ENCODE measurements at regions of chr1 and their contacts with region 1.

Region 1: GRCh38 chr1:168960595-168960994 is 145.9 kb upstream of the ATP1B1 start:
- DNase-seq: peak in 7 of 10 donors; percentile 38 to 74 (median 53)
- H3K4me3 ChIP-seq: peak overlapping the region in 12 of 59 donors; percentile 6 to 35 (median 15)
- H3K27ac ChIP-seq: peak overlapping the region in 51 of 59 donors; percentile 12 to 88 (median 62)
- H3K27me3 ChIP-seq: no peaks in the 10 kb centered on the region
- CTCF ChIP-seq: peak in 6 of 56 donors; percentile 11 to 28 (median 16)

Region 2: DNA sequence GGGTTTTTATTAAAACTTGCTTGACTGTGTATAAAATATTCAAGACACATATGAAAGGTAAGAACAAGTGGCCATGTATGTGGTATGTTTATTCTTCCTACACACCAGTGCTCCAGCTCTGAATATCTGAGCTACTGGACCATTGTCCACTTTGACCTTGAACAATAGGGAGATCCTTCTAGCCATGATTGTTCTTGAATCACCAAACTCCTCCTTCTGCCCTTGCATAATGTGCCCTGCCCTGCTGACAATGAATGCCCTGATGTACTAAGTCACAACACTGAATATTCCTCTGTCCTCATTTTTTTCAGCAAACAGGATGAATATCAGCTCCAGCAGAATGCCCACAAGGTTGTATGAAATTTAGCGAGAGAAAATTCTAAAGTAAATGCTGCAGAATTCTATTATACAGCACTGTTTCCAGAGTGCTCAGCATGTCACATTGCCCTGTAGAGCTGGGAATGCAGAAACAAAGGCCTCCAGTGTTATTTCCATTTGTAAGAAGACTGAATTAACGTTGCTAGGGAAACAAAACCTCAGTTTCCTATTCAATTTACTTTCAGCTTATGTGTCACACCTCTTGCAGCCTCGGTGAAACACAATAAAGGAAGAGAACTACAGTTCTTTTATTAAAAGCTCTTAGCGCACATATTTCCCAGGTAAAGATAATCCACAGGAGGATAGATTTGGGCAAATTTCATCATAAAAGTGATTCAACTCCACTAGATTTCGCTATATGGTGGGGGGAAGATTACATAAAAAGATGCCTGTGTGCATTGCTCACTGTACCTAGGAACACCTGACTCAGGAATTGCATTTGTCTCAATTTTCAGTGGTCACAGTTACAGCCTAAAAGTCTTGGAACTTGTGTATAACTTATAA is 41.5 kb before region 1 on chr1:
- intact Hi-C with region 1: loop called in 1 of 2 experiments (anchors 5 kb)
- DNase-seq: no peak
- H3K4me3 ChIP-seq: peak overlapping the region in 3 of 59 donors; percentile 5 to 26 (median 8)
- H3K27ac ChIP-seq: peak overlapping the region in 51 of 59 donors; percentile 8 to 83 (median 59)
- H3K27me3 ChIP-seq: no peaks in the 10 kb centered on the region
- CTCF ChIP-seq: peak in 1 of 56 donors; percentile 15

Region 3: DNA sequence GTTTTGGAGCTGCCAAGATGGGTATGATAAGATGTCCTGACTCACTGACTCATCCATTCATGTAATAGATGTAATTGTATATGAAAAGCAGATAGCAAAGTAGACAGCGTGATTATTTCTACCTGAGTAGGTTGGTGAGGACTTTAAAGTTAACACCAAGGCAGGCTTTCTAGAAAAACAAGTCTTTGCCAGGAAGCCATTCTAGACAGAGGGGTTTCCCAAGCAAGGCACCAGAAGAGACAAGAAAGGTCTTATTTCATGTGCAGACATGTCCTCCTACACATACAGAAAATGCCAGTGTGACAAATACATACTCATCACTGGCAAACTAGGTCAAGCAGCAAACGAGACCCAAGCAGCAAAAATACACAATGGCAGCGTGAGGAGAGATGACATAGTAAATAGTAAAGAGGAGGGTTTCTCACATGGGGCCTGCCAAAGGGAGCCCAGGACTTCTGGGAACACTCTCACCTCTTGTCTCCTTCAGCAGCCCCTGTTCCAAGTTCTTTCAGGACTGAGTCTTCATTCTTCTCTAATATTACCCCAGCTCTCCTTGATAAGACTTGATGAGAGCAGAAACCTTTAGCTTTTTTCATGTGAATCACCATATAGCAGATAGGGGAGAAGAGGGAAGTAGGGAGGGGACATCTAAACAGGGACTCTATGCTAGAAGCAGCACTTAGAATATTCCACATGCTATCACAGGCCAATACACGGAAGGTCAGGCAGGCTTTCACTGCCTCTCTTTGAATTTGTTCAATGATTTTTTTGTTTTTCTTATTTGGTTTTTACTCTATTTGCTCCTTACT is 31.3 kb after region 1 on chr1:
- intact Hi-C with region 1: no loop called
- DNase-seq: no peak
- H3K4me3 ChIP-seq: no peak overlapping the region
- H3K27ac ChIP-seq: no peak overlapping the region
- H3K27me3 ChIP-seq: no peaks in the 10 kb centered on the region
- CTCF ChIP-seq: no peak